Right ventricle myocardium superior (tissue), 1 donor: ENCODE measurements at regions of chr4 and their contacts with region 1.

Region 1: GRCh38 chr4:71229477-71230270 is 109.1 kb upstream of the SLC4A4 start:
- DNase-seq: no peak
- ATAC-seq: peak; percentile 70

Region 2: DNA sequence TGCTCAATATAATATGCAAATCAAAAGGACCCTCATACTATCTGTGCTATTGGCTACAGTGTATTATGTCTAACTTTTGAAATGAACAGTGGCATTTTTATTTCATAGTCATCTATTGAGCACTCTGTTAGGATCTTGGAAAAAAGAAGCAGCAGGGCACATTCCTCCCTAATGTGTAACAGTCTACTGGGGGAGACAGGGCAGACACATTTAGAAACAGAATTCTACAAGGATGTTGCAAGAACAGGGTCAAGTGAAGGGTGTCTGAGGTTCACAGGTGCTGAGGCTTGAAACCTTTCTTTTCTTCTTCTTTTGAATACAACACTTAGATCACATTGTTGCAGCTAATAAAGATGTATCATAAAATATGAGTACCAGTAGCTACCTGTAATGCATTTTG is 20.5 kb before region 1 on chr4:
- intact Hi-C with region 1: no loop called
- DNase-seq: no peak
- ATAC-seq: peak; percentile 55

Region 3: GRCh38 chr4:71322425-71322824 is 92.8 kb after region 1 on chr4:
- intact Hi-C with region 1: no loop called
- DNase-seq: no peak
- ATAC-seq: peak; percentile 49

Region 4: DNA sequence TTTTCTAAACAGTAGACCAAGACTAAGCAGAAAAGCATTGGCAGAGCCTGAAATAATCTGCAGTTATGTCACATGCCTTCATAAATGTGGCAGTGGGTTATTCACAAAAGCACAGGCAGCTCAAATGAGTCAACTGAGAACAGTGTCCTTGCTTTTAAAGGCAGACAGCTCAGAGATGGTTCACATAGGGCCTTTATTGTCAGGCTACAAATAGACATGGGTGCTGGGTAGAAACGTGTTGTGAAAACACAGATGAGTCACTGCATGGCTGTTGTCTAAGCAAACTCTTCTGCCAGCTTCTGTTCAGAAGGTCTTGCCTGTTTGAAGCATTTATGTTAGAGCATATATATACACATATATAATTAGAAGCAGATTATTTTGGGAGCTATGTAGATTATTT is 227.2 kb after region 1 on chr4:
- intact Hi-C with region 1: loop called (anchors 10 kb)
- DNase-seq: no peak
- ATAC-seq: peak; percentile 89